ENCODE measurements at regions of chr12 and their contacts with region 1.

Region 1: GRCh38 chr12:49130151-49131050 is 794 bp downstream of the TUBA1B start:
- DNase-seq: peak; percentile 93
- H3K4me3 Mint-ChIP-seq: peak overlapping the region; percentile 98
- H3K27ac Mint-ChIP-seq: peak overlapping the region; percentile 99
- H3K4me1 Mint-ChIP-seq: peaks cover 52% of the 10 kb centered on the region
- H3K27me3 Mint-ChIP-seq: no peaks in the 10 kb centered on the region

Region 2: DNA sequence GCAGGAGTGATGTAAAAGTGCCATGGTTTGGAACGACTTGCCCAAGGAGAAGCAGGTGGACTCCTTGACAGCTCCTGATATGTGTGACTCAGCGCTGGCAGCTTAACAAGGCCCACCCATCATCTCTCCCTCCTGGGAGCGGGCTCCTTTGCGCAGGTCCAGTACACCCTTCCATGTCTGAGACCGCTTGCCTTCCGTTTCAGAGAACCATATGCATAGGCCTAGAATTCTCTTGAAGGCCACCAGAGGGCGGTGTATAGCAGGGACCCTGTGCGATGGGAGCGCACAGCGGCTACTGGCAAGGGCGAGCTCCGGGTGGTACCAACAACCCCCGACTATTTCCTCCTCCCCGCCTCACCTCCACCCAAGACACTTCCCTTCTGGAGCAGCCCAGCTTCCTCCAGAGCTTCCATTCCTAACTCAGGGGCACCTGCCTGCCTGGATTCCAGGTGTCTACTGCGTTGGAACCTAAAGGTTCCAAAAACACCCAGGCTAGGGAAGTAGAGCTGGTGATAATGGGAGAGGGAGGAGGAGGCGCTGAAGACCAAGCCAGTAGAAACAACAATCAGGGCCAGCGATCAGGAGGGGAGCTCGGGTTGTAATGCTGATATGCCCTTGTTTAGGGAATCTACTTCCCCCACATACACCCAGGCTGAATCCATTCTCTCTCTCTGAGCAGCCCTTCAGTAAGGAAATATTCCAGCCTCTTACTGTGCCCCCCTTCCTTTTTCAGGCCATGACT is 42.0 kb before region 1 on chr12:
- CTCF ChIA-PET with region 1: interaction called, 19 read pairs
- POLR2A ChIA-PET with region 1: no interaction called
- DNase-seq: peak; percentile 80
- H3K4me3 Mint-ChIP-seq: peak overlapping the region; percentile 4
- H3K27ac Mint-ChIP-seq: no peak overlapping the region
- H3K4me1 Mint-ChIP-seq: peaks cover 55% of the 10 kb centered on the region
- H3K27me3 Mint-ChIP-seq: peaks cover 44% of the 10 kb centered on the region

Region 3: GRCh38 chr12:49098035-49098451 is 32.4 kb before region 1 on chr12:
- CTCF ChIA-PET with region 1: interaction called, 26 read pairs
- POLR2A ChIA-PET with region 1: interaction called, 3 read pairs
- DNase-seq: peak; percentile 69
- H3K4me3 Mint-ChIP-seq: no peak overlapping the region
- H3K27ac Mint-ChIP-seq: no peak overlapping the region
- H3K4me1 Mint-ChIP-seq: peaks cover 18% of the 10 kb centered on the region
- H3K27me3 Mint-ChIP-seq: peaks cover 27% of the 10 kb centered on the region

Region 4: GRCh38 chr12:49110464-49111155 is 19.8 kb before region 1 on chr12 and contains the start of gene LMBR1L:
- CTCF ChIA-PET with region 1: interaction called, 37 read pairs
- POLR2A ChIA-PET with region 1: interaction called, 9 read pairs
- DNase-seq: peak; percentile 99
- H3K4me3 Mint-ChIP-seq: peak within 1 kb of the TSS; percentile 96
- H3K27ac Mint-ChIP-seq: peak within 1 kb of the TSS; percentile 94
- H3K4me1 Mint-ChIP-seq: peaks cover 25% of the 10 kb centered on the region
- H3K27me3 Mint-ChIP-seq: no peaks in the 10 kb centered on the region
- total RNA-seq, gene LMBR1L: 60.3 to 62.3 TPM

Region 5: GRCh38 chr12:49146406-49146805 is 16.0 kb after region 1 on chr12:
- CTCF ChIA-PET with region 1: interaction called, 10 read pairs
- POLR2A ChIA-PET with region 1: interaction called, 3 read pairs
- DNase-seq: no peak
- H3K4me3 Mint-ChIP-seq: no peak overlapping the region
- H3K27ac Mint-ChIP-seq: no peak overlapping the region
- H3K4me1 Mint-ChIP-seq: peaks cover 8% of the 10 kb centered on the region
- H3K27me3 Mint-ChIP-seq: no peaks in the 10 kb centered on the region

Region 6: DNA sequence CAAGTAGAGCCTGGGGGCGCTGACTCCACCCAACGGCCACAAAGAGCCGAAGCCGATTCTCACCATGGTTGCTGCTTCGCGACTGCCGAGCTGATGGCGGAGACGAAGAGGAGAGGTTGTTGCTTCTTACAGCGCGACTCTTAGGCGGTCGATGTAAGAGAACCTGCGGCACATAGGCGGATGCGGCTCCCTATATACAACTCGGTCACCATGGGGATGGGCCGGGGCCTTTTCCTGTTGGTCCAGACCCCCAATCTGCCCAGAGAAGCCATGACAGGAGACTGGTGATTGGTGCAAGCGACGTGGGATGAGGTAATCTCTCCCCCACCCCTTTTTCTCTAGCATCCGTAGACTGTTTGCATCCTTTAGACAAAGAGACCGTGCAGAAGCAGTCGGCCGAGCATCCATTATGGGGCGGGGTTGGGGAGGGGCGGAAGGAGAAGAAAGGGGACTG is 58.5 kb after region 1 on chr12 and contains the start of gene TUBA1A:
- CTCF ChIA-PET with region 1: interaction called, 6 read pairs
- POLR2A ChIA-PET with region 1: interaction called, 17 read pairs
- DNase-seq: peak; percentile 99
- H3K4me3 Mint-ChIP-seq: peak within 1 kb of the TSS; percentile 97
- H3K27ac Mint-ChIP-seq: peak within 1 kb of the TSS; percentile 99
- H3K4me1 Mint-ChIP-seq: peaks cover 29% of the 10 kb centered on the region
- H3K27me3 Mint-ChIP-seq: peaks cover 6% of the 10 kb centered on the region
- total RNA-seq, gene TUBA1A: 94.8 to 109 TPM

Region 7: GRCh38 chr12:49232940-49233841 is 102.8 kb after region 1 on chr12:
- CTCF ChIA-PET with region 1: interaction called, 5 read pairs
- POLR2A ChIA-PET with region 1: interaction called, 10 read pairs
- DNase-seq: no peak
- H3K4me3 Mint-ChIP-seq: peak overlapping the region; percentile 84
- H3K27ac Mint-ChIP-seq: peak overlapping the region; percentile 77
- H3K4me1 Mint-ChIP-seq: peaks cover 25% of the 10 kb centered on the region
- H3K27me3 Mint-ChIP-seq: no peaks in the 10 kb centered on the region